Natural killer cell (primary cell): ENCODE measurements at regions of chr9 and their contacts with region 1.

Region 1: GRCh38 chr9:93028448-93029006 is 30.0 kb upstream of the SUSD3 start:
- DNase-seq: peak in 1 of 2 donors; percentile 92
- ATAC-seq: peak; percentile 88 to 90 (median 88)
- H3K4me3 ChIP-seq: peak overlapping the region; percentile 2
- H3K4me3 Mint-ChIP-seq: peak overlapping the region; percentile 89
- H3K27ac ChIP-seq: peak overlapping the region; percentile 73
- H3K27ac Mint-ChIP-seq: peak overlapping the region; percentile 91 to 97
- H3K4me1 ChIP-seq: peaks cover 81% of the 10 kb centered on the region
- H3K4me1 Mint-ChIP-seq: peaks cover 35 to 70% of the 10 kb centered on the region in 2 donors
- H3K27me3 ChIP-seq: no peaks in the 10 kb centered on the region
- H3K27me3 Mint-ChIP-seq: no peaks in the 10 kb centered on the region
- CTCF ChIP-seq: no peak

Region 2: GRCh38 chr9:92963831-92964626 is 64.5 kb before region 1 on chr9:
- intact Hi-C with region 1: loop called (anchors 5 kb)
- DNase-seq: peak; percentile 78 to 91
- ATAC-seq: peak; percentile 72 to 87 (median 78)
- H3K4me3 ChIP-seq: peak overlapping the region; percentile 65
- H3K4me3 Mint-ChIP-seq: peak overlapping the region; percentile 95
- H3K27ac ChIP-seq: peak overlapping the region; percentile 93
- H3K27ac Mint-ChIP-seq: peak overlapping the region; percentile 97
- H3K4me1 ChIP-seq: peaks cover 87% of the 10 kb centered on the region
- H3K4me1 Mint-ChIP-seq: peaks cover 76 to 83% of the 10 kb centered on the region in 2 donors
- H3K27me3 ChIP-seq: no peaks in the 10 kb centered on the region
- H3K27me3 Mint-ChIP-seq: no peaks in the 10 kb centered on the region
- CTCF ChIP-seq: no peak